ENCODE measurements at regions of chr6 and their contacts with region 1.

Region 1: DNA sequence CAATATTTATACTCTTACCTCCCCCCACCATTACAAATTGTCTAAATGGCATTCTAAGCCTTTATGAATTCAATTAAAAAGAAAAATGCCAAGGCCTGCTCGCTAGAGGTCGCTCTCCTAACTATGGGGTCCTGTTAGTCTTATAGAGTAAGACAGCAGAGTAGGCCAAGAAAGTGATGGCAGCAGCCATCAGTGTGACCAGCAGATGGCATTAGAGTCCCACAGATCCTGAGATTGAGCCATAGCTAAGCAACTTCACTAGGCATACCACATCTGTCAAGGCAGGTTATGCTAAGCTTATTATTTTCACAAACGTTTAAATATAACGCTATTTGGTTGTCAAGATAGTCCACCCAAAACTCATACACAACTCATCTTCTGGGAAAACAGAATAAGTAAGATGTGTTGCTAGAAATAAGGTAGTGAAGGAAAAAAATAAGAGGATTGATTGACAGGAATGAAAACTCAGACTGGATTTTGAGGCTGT is 57.6 kb upstream of the SCAF8 start:
- DNase-seq: peak; percentile 80
- H3K4me3 Mint-ChIP-seq: no peak overlapping the region
- H3K27ac Mint-ChIP-seq: no peak overlapping the region
- H3K4me1 Mint-ChIP-seq: peaks cover 2% of the 10 kb centered on the region
- H3K27me3 Mint-ChIP-seq: peaks cover 2% of the 10 kb centered on the region

Region 2: GRCh38 chr6:154247119-154247861 is 428.4 kb before region 1 on chr6:
- intact Hi-C with region 1: no loop called
- DNase-seq: no peak
- H3K4me3 Mint-ChIP-seq: peak overlapping the region; percentile 84
- H3K27ac Mint-ChIP-seq: peak overlapping the region; percentile 52
- H3K4me1 Mint-ChIP-seq: peaks cover 79% of the 10 kb centered on the region
- H3K27me3 Mint-ChIP-seq: peaks cover 27% of the 10 kb centered on the region

Region 3: GRCh38 chr6:154606457-154606856 is 69.2 kb before region 1 on chr6:
- intact Hi-C with region 1: loop called (anchors 5 kb)
- DNase-seq: peak; percentile 26
- H3K4me3 Mint-ChIP-seq: peak overlapping the region; percentile 5
- H3K27ac Mint-ChIP-seq: peak overlapping the region; percentile 71
- H3K4me1 Mint-ChIP-seq: peaks cover 38% of the 10 kb centered on the region
- H3K27me3 Mint-ChIP-seq: peaks cover 10% of the 10 kb centered on the region

Region 4: GRCh38 chr6:154733012-154733625 is 57.5 kb after region 1 on chr6 and contains the start of gene SCAF8:
- intact Hi-C with region 1: loop called (anchors 1 kb)
- DNase-seq: peak; percentile 83
- H3K4me3 Mint-ChIP-seq: peak within 1 kb of the TSS; percentile 91
- H3K27ac Mint-ChIP-seq: peak within 1 kb of the TSS; percentile 98
- H3K4me1 Mint-ChIP-seq: peaks cover 24% of the 10 kb centered on the region
- H3K27me3 Mint-ChIP-seq: no peaks in the 10 kb centered on the region
- total RNA-seq, gene SCAF8: 35.4 and 37.3 TPM in 2 replicates

Region 5: DNA sequence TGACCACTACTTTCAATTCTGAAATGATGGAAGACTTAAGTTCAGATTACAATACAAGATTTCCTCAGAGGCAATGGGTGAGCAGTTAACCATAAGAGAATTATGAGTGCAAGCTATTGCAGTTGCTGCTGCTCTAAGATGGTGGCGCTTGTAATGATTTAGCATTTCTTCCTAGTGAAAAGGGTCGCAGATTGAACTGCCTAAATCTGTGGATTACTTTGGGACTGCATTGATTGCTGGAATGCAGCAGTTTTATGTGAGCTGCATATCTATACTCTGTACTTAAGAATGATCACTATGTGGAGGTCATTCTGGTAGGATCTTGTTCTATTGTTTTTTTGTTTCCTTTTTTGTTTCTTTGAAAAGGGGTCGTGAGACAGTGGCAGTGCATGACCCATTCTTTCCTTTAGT is 62.9 kb after region 1 on chr6:
- intact Hi-C with region 1: loop called (anchors 1 kb)
- DNase-seq: no peak
- H3K4me3 Mint-ChIP-seq: no peak overlapping the region
- H3K27ac Mint-ChIP-seq: peak overlapping the region; percentile 36
- H3K4me1 Mint-ChIP-seq: peaks cover 35% of the 10 kb centered on the region
- H3K27me3 Mint-ChIP-seq: no peaks in the 10 kb centered on the region

Region 6: DNA sequence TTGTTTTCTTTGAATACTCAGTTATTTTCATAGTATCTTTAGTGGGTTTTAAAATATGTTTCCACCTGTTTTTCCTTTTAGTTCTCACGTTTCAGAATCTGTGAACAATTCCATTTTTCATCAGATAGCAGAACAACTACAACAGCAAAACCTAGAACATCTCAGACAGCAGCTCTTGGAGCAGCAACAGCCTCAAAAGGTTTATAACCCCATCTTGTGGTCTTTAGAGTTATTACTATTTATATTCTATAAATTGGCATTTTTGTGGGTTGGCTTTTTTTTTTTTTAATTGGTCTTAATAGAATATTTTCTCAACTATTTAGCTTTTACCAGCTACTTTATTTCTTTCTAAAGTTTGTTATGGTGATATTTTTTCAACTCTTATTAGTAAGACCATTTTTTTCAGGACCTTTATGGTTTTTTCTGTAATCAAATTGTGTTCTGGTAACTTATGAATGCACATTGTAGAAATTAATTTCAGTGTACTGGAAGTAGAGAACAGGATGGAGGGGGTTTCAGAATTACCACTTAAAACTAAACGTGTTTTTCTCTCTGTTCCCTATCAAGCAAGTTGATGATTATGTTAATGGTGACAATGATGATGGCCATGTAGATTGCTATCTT is 129.8 kb after region 1 on chr6:
- intact Hi-C with region 1: loop called (anchors 1 kb)
- DNase-seq: no peak
- H3K4me3 Mint-ChIP-seq: no peak overlapping the region
- H3K27ac Mint-ChIP-seq: no peak overlapping the region
- H3K4me1 Mint-ChIP-seq: peaks cover 2% of the 10 kb centered on the region
- H3K27me3 Mint-ChIP-seq: no peaks in the 10 kb centered on the region

Region 7: GRCh38 chr6:154928325-154928922 is 252.8 kb after region 1 on chr6:
- intact Hi-C with region 1: loop called (anchors 5 kb)
- DNase-seq: peak; percentile 36
- H3K4me3 Mint-ChIP-seq: no peak overlapping the region
- H3K27ac Mint-ChIP-seq: no peak overlapping the region
- H3K4me1 Mint-ChIP-seq: peaks cover 16% of the 10 kb centered on the region
- H3K27me3 Mint-ChIP-seq: no peaks in the 10 kb centered on the region

Region 8: DNA sequence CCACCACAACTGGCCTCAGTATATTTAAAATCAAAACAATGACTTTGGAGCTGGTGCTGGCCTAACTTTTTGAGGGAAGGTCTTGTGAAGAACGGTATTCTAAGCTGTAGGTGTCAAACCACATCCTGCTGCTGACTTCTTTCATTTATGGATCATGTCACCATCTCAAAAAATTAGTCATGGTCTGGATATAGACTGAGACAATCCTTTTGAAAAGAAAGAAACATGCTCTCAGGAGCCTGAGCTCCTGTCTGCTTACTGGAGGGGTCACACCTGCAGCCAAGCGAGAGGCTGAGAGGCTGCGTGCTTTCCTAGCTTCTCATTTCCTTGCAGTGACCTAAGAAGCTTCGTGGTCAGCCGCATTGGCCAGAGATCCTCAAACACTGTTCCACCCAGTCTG is 374.7 kb after region 1 on chr6:
- intact Hi-C with region 1: no loop called
- DNase-seq: peak; percentile 22
- H3K4me3 Mint-ChIP-seq: peak overlapping the region; percentile 66
- H3K27ac Mint-ChIP-seq: peak overlapping the region; percentile 96
- H3K4me1 Mint-ChIP-seq: peaks cover 30% of the 10 kb centered on the region
- H3K27me3 Mint-ChIP-seq: no peaks in the 10 kb centered on the region